Right ventricle myocardium superior (tissue), 1 donor: ENCODE measurements at regions of chr18 and their contacts with region 1.

Region 1: DNA sequence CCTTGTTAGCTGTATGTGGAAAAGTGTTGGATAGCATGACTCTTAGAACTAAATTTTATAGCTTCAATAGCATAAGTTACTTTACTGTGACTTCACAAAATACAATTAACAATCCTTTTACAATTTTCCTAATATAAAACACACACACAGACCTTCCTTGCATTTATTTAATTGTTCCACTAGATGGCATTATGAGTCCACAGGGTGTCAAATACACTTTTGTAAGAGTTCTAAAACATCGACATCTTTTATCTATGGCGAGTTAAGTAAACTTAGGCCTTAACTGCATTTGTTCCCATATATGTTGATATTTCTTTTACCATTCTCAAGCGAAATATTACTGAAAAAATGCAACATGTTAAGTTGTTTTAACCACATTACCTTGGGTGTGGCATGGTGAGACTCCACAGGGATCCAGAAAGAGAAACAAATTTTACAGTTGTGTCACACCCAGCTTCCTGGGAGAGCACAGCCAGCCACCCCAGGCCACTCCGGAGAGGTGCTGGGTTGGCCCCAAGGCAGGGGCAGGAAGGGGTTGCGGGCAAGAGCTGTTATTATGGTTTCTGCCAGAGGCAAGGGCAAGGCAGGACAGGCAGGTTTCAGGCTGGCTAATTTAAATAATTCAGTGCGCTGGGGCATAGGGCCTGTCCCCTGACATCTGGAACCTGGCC is 312.4 kb upstream of the MC4R start:
- DNase-seq: no peak
- ATAC-seq: no peak

Region 2: DNA sequence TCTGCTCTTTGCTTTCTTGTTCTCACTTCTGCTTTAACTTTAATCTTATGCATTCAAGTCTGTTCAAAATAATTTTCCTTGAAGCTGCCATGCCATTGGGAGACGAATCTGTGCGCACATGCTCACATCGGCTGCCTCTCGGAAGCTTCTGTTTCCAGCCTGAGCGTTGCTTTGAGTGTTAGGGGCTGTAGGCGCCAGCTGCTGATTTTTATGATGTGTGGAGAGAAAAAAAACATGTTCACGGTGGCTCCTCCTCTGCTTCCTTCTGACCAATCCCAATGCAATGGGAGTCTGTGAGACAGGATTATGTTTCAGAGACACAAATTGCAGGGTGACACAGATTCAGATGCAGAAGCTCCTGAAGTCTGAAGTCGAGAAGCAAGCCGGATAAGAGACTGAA is 312.4 kb before region 1 on chr18 and contains the start of gene MC4R:
- intact Hi-C with region 1: no loop called
- DNase-seq: no peak
- ATAC-seq: peak; percentile 43
- total RNA-seq, gene MC4R: not detected

Region 3: DNA sequence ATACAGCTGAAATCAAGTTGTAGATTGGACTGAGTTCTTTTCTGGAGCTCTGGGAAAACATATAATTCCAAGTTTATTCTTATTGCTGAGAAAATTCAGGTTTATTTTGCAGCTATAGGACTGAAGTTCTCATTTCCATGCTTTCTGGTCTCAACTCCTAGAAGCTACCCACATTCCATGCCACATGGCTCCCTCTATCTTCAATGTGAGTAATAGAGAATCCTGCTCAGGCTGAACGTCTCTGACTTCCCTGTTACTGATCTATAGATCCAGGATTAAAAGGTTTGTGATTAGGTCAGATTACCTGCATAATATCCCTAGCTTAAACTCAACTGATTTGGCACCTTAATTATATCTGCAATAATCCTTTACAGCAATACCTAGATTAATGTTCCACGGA is 141.4 kb after region 1 on chr18:
- intact Hi-C with region 1: loop called (anchors 10 kb)
- DNase-seq: no peak
- ATAC-seq: no peak